ENCODE measurements at regions of chr4 and their contacts with region 1.

Region 1: GRCh38 chr4:136687118-136687517 is 845.2 kb downstream of the PCDH18 start:
- DNase-seq: no peak
- H3K4me3 Mint-ChIP-seq: no peak overlapping the region
- H3K27ac Mint-ChIP-seq: no peak overlapping the region
- H3K4me1 Mint-ChIP-seq: peaks cover 19% of the 10 kb centered on the region
- H3K27me3 Mint-ChIP-seq: no peaks in the 10 kb centered on the region
- CTCF ChIP-seq: no peak

Region 2: DNA sequence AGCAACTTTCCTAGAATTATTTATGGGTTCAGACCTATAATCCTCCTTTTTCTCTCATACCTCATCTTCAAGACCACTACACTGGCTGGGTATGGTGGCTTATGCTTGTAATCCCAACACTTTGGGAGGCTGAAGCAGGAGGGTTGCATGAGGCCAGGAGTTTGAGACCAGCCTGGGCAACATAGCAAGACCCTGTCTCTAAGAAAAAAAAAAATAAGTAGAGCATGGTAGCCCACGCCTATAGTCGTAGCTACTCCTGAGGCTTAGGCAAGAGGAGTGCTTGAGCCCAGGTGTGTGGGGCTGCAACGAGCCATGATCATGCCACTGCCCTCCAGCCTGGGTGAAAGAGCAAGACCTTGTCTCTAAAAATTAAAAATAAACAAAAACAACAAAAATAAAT is 12.8 kb after region 1 on chr4:
- CTCF ChIA-PET with region 1: interaction called, 12 read pairs
- POLR2A ChIA-PET with region 1: no interaction called
- intact Hi-C with region 1: no loop called
- DNase-seq: no peak
- H3K4me3 Mint-ChIP-seq: no peak overlapping the region
- H3K27ac Mint-ChIP-seq: no peak overlapping the region
- H3K4me1 Mint-ChIP-seq: peaks cover 5% of the 10 kb centered on the region
- H3K27me3 Mint-ChIP-seq: no peaks in the 10 kb centered on the region
- CTCF ChIP-seq: no peak

Region 3: DNA sequence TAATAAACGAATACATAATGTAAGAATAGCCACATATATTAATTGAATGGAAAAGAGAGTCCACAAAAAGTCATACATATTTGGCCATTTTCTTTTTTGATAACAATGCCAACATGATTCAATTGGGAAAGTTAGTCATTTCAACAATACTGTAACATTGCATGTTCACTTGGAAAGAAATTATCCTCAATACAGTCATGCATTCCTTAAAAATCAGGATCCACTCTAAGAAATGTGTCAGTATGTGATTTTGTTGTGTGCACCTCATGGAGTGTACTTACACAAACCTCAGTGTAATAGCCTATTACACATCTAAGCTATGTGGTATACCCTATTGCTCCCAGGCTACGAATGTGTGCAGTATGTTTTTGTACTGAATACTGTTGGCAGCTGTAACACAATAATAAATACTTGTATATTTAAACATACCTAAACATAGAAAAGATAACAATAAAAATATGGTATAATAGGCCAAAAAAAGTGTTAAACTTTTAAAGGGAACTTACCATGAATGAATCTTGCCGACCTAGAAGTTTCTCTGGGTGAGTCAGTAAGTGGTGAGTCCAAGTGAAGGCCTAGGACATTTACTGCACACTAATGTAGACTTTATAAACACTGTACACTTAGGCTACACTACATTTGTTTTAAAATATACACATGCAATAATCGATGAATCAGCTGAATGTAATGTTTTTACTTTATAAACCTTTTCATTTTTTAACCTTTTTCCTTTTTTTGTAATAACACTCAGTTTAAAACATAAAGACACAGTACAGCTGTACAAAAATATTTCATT is 38.4 kb after region 1 on chr4:
- CTCF ChIA-PET with region 1: no interaction called
- POLR2A ChIA-PET with region 1: no interaction called
- intact Hi-C with region 1: no loop called
- DNase-seq: no peak
- H3K4me3 Mint-ChIP-seq: no peak overlapping the region
- H3K27ac Mint-ChIP-seq: no peak overlapping the region
- H3K4me1 Mint-ChIP-seq: no peaks in the 10 kb centered on the region
- H3K27me3 Mint-ChIP-seq: no peaks in the 10 kb centered on the region
- CTCF ChIP-seq: no peak